ENCODE measurements at regions of chr14 and their contacts with region 1.

Region 1: DNA sequence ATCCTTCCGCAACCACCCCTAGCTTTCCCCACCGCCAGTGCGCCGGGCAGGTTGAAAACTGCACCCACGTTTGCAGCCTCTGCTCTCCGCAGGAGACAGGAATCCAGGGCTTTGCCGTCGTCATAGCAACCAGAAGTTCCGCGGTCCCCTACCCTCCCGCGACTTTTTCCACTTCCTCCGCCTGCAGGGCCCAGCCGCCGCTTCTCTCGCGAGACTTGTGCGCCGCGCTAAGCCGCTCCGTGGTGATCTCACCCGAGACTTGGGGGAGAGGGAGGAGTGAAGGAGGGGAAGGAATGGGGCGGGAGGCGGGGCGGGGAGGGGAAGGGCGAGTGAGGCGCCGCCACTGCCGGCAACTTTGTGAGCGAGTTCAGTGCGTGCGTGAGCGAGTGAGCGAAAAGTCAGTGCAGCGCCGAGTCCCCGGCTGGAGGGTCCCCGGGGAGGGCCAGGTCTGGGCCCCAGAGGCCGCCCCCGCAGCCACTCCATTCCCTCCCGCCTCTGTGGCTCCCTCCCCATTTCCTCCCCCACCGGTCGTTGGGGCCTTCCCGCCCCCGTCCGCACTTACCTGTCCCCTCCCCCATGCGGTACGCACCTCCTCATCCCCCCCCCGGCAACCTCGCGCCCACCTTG is 413.0 kb downstream of the PCNX1 start:
- DNase-seq: peak; percentile 99
- ATAC-seq: peak; percentile 79
- H3K4me3 ChIP-seq: peak within 1 kb of the TSS; percentile 78
- H3K27ac ChIP-seq: peak within 1 kb of the TSS; percentile 90
- H3K4me1 ChIP-seq: peaks cover 26% of the 10 kb centered on the region
- H3K27me3 ChIP-seq: no peaks in the 10 kb centered on the region
- CTCF ChIP-seq: no peak

Region 2: GRCh38 chr14:71130491-71131179 is 189.6 kb before region 1 on chr14:
- CTCF ChIA-PET with region 1: no interaction called
- POLR2A ChIA-PET with region 1: interaction called, 10 read pairs
- intact Hi-C with region 1: no loop called
- DNase-seq: peak; percentile 81
- ATAC-seq: peak; percentile 84
- H3K4me3 ChIP-seq: peak overlapping the region; percentile 19
- H3K27ac ChIP-seq: peak overlapping the region; percentile 79
- H3K4me1 ChIP-seq: peaks cover 18% of the 10 kb centered on the region
- H3K27me3 ChIP-seq: no peaks in the 10 kb centered on the region
- CTCF ChIP-seq: no peak

Region 3: DNA sequence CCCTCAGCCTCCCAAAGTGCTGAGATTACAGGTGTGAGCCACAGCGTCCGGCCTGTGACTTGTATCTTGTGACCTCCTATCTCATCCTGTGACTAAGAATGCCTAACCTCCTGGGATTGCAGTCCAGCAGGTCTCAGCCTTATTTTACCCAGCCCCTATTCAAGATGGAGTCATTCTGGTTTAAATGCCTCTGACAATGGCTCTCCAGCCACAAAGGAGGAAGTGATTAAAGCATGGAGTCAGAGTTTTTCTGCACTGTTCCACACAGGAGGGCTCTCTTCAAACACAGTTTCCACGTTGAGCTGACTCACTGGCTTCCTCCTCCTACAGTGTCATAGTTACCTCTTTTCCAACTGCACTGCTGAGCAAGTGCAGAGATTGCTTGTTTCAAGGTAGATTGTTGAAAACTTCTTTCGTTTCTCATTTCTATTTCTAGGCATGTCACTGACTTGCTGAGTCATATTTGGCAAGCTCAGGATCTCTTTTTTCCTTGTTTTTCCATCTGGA is 29.2 kb before region 1 on chr14:
- CTCF ChIA-PET with region 1: interaction called, 5 read pairs
- POLR2A ChIA-PET with region 1: interaction called, 3 read pairs
- intact Hi-C with region 1: loop called (anchors 1 kb)
- DNase-seq: peak; percentile 99
- ATAC-seq: peak; percentile 95
- H3K4me3 ChIP-seq: no peak overlapping the region; the same call in 1 of the 2 replicates
- H3K27ac ChIP-seq: peak overlapping the region; percentile 94
- H3K4me1 ChIP-seq: peaks cover 46% of the 10 kb centered on the region
- H3K27me3 ChIP-seq: no peaks in the 10 kb centered on the region
- CTCF ChIP-seq: no peak

Region 4: DNA sequence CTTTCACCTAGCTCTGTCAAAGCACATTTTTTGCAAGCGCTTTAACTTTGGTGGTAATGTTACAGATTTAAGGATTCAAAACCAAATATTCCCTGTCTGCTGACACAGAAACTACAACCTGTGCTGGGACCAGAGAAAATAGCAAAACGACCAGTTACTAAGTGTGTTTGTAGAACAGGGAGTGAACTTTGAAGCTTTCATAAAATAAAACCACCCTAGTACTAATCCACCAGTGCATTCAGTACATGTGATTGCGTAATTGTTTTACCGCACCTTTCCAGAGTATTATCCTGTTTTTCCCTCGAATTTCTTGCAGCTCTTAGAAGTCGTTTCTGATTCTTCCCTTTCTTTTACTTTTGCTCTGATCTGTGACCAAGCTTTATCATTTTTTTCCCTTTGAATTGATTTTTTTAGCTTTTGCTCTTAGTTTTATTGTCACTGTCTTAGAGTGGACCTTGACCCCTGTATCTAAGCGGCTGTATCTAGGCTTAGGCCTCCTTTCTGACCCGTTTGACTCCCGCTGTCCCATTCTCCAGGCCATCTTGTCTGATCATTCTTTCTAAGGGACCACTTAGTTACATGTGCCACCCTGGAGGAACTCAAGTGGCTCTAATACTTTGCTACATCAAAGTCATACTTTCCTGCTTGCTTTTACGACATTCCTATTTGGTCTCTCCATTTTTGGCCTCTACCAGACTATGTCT is 16.4 kb after region 1 on chr14:
- CTCF ChIA-PET with region 1: no interaction called
- POLR2A ChIA-PET with region 1: no interaction called
- intact Hi-C with region 1: no loop called
- DNase-seq: no peak
- ATAC-seq: no peak
- H3K4me3 ChIP-seq: no peak overlapping the region
- H3K27ac ChIP-seq: no peak overlapping the region
- H3K4me1 ChIP-seq: no peaks in the 10 kb centered on the region
- H3K27me3 ChIP-seq: no peaks in the 10 kb centered on the region
- CTCF ChIP-seq: no peak

Region 5: GRCh38 chr14:71415404-71415690 is 95.1 kb after region 1 on chr14:
- CTCF ChIA-PET with region 1: no interaction called
- POLR2A ChIA-PET with region 1: interaction called, 14 read pairs
- intact Hi-C with region 1: no loop called
- DNase-seq: no peak
- ATAC-seq: no peak
- H3K4me3 ChIP-seq: no peak overlapping the region
- H3K27ac ChIP-seq: peak overlapping the region; percentile 52; the same call in 1 of the 2 replicates
- H3K4me1 ChIP-seq: peaks cover 23% of the 10 kb centered on the region
- H3K27me3 ChIP-seq: no peaks in the 10 kb centered on the region
- CTCF ChIP-seq: no peak

Region 6: DNA sequence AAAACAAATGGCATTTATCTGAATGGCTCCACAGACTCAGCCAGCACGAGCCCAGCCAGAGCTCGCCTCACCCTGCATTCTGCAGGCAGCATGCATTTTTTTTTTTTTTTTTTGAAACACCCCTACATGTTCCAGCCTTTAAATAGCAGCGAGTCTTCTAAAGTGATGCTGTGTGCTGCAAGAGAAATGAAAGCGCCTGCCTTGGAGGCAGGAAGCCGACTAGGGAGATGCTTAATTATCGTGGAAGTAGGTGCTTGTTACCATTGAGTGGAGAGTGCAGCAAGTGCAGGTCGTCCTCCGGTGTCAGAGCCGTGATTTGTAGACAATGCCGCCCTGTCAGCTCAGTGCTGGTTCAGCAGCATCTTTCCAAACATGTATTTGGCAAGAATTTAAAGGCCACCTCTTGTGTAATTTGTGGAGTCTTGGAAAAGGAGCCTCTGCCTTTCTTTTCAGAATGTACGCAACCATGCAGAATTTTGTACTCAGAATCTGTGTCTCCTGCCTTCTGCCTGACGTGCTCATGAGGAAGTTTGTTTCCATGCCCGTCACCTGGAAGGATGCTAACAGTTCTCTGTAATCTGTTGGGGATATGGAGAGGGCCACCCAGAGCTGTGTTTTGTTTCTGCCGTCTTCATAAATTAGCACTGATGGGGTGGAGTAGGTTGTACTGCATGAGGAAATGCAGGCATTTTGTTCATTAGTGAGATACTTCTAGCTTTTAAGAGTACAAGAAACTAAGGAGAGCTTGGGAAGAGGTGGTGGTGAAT is 266.1 kb after region 1 on chr14:
- CTCF ChIA-PET with region 1: no interaction called
- POLR2A ChIA-PET with region 1: no interaction called
- intact Hi-C with region 1: loop called (anchors 2 kb)
- DNase-seq: no peak
- ATAC-seq: no peak
- H3K4me3 ChIP-seq: no peak overlapping the region
- H3K27ac ChIP-seq: no peak overlapping the region
- H3K4me1 ChIP-seq: peaks cover 19% of the 10 kb centered on the region
- H3K27me3 ChIP-seq: no peaks in the 10 kb centered on the region
- CTCF ChIP-seq: no peak

Region 7: GRCh38 chr14:71711619-71712018 is 391.4 kb after region 1 on chr14:
- CTCF ChIA-PET with region 1: no interaction called
- POLR2A ChIA-PET with region 1: no interaction called
- intact Hi-C with region 1: loop called (anchors 1 kb)
- DNase-seq: peak; percentile 62
- ATAC-seq: peak; percentile 90
- H3K4me3 ChIP-seq: no peak overlapping the region
- H3K27ac ChIP-seq: no peak overlapping the region
- H3K4me1 ChIP-seq: peaks cover 20% of the 10 kb centered on the region
- H3K27me3 ChIP-seq: no peaks in the 10 kb centered on the region
- CTCF ChIP-seq: no peak

Region 8: GRCh38 chr14:71855399-71856036 is 535.3 kb after region 1 on chr14:
- CTCF ChIA-PET with region 1: no interaction called
- POLR2A ChIA-PET with region 1: no interaction called
- intact Hi-C with region 1: loop called (anchors 1 kb)
- DNase-seq: peak; percentile 89
- ATAC-seq: peak; percentile 90
- H3K4me3 ChIP-seq: no peak overlapping the region
- H3K27ac ChIP-seq: no peak overlapping the region
- H3K4me1 ChIP-seq: no peaks in the 10 kb centered on the region
- H3K27me3 ChIP-seq: no peaks in the 10 kb centered on the region; the same call in 1 of the 2 replicates
- CTCF ChIP-seq: peak; percentile 96